Common myeloid progenitor, CD34-positive (primary cell): ENCODE measurements at regions of chr5 and their contacts with region 1.

Region 1: DNA sequence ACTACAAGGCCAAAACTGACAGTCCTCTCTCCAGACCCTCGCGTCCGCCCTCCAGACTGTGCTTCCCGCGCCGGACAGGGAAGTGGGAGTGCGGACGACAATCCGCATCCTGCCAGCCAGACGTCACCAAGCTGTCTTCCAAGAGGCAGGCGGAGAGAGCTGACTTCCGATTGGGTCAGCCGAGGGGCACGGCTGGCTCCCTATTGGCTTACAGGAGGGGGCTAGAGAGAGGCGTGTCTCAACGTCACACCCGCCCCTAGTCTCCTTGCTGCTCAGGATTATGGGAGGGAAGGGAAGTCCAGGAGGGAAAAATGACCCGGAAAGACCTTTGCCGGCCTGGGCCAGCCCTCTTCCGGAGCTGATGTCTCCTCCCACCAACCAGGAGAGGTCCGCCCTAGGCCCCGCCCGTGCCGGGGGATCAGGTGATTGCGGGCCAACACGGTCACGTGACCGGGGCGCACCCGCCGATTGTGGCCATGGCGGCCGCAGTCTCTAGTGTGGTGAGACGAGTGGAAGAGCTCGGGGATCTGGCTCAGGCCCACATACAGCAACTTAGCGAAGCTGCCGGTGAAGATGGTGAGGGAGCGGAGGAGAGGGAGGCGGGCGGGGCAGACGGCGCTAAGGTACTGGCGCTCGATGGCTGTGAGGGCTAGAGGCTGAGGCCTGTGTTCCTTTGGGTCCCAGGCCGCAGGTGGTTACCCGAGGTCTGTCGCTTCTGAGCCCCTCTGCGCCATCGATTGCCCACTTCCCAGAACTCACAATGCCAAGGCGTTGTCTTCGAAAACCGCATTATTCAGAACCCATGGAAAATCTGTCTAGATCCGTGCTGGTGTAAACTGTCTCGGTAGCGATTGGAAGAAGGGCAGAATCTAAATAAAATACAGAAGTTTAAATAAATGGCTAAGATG is at the start of gene RIMOC1:
- DNase-seq: peak; percentile 99
- H3K4me3 ChIP-seq: peak within 1 kb of the TSS; percentile 78 to 98 (median 88)
- H3K27ac ChIP-seq: peak within 1 kb of the TSS; percentile 96 to 98
- H3K4me1 ChIP-seq: peaks cover 10 to 22% (median 17%) of the 10 kb centered on the region in 4 experiments
- H3K27me3 ChIP-seq: peaks cover 0 to 2% (median 1%) of the 10 kb centered on the region in 5 experiments

Region 2: GRCh38 chr5:41831155-41831554 is 73.0 kb before region 1 on chr5:
- CTCF ChIA-PET with region 1: no interaction called
- POLR2A ChIA-PET with region 1: no interaction called
- DNase-seq: no peak
- H3K4me3 ChIP-seq: no peak overlapping the region
- H3K27ac ChIP-seq: no peak overlapping the region
- H3K4me1 ChIP-seq: no peaks in the 10 kb centered on the region
- H3K27me3 ChIP-seq: no peaks in the 10 kb centered on the region

Region 3: DNA sequence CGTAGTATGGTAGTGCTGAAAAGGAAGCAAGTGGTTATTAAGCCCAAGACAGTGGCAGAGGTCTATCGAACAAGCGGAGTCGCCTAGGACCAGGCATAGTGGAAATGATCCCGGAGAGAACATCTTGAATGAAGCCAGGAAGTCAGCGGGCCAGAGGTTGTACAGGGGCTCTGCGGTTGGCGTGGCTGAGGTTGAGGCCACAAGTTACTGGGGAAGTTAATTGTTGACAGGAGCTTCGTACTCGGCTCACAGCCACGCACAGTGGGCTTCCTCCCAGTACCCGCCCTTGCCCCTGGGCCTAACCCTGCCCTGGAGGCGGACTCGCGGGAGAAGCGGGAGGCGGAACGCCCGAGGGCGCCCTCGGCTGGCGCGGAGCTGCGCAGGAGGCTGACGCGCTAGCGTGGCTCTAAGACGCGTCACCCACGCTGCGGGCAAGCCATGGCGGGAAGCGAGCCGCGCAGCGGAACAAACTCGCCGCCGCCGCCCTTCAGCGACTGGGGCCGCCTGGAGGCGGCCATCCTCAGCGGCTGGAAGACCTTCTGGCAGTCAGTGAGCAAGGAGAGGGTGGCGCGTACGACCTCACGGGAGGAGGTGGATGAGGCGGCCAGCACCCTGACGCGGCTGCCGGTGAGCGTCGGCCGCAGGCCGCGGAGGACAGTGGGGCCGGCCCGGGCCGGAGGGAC is 20.9 kb after region 1 on chr5 and contains the start of gene FBXO4:
- CTCF ChIA-PET with region 1: interaction called, 5 read pairs
- POLR2A ChIA-PET with region 1: interaction called, 18 read pairs
- DNase-seq: peak; percentile 96 to 99 (median 99)
- H3K4me3 ChIP-seq: peak within 1 kb of the TSS; percentile 72 to 90 (median 84)
- H3K27ac ChIP-seq: peak within 1 kb of the TSS; percentile 88 to 92
- H3K4me1 ChIP-seq: peaks cover 0 to 25% (median 15%) of the 10 kb centered on the region in 4 experiments
- H3K27me3 ChIP-seq: no peaks in the 10 kb centered on the region

Region 4: GRCh38 chr5:41955432-41956024 is 51.4 kb after region 1 on chr5:
- CTCF ChIA-PET with region 1: no interaction called
- POLR2A ChIA-PET with region 1: no interaction called
- DNase-seq: no peak
- H3K4me3 ChIP-seq: no peak overlapping the region
- H3K27ac ChIP-seq: no peak overlapping the region
- H3K4me1 ChIP-seq: no peaks in the 10 kb centered on the region
- H3K27me3 ChIP-seq: no peaks in the 10 kb centered on the region

Region 5: DNA sequence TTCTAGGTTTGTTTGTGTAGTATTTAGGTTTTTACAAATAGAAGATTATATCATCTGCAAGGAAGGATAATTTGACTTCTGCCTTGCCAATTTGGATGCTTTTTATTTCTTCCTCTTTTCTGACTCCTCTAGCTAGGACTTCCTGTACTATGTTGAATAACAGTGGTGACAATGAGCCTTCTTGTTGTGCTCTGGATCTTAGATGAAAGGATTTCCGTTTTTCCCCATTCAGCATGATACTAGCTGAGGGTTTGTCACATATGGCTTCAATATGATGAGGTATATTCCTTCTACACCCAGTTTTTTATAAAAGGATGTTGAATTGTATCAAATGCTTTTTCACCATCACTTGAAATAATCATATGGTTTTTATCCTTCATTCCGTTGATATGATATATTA is 122.3 kb after region 1 on chr5:
- CTCF ChIA-PET with region 1: no interaction called
- POLR2A ChIA-PET with region 1: no interaction called
- DNase-seq: no peak
- H3K4me3 ChIP-seq: no peak overlapping the region
- H3K27ac ChIP-seq: no peak overlapping the region
- H3K4me1 ChIP-seq: no peaks in the 10 kb centered on the region
- H3K27me3 ChIP-seq: peaks cover 0 to 2% (median 2%) of the 10 kb centered on the region in 5 experiments